Left ventricle myocardium superior (tissue), 1 donor: ENCODE measurements at regions of chr10 and their contacts with region 1.

Region 1: GRCh38 chr10:118568327-118568848 is 27.1 kb downstream of the PRLHR start:
- DNase-seq: no peak
- ATAC-seq: peak; percentile 66

Region 2: GRCh38 chr10:118720685-118721538 is 152.5 kb after region 1 on chr10:
- intact Hi-C with region 1: loop called (anchors 2 kb)
- DNase-seq: no peak
- ATAC-seq: peak; percentile 52

Region 3: DNA sequence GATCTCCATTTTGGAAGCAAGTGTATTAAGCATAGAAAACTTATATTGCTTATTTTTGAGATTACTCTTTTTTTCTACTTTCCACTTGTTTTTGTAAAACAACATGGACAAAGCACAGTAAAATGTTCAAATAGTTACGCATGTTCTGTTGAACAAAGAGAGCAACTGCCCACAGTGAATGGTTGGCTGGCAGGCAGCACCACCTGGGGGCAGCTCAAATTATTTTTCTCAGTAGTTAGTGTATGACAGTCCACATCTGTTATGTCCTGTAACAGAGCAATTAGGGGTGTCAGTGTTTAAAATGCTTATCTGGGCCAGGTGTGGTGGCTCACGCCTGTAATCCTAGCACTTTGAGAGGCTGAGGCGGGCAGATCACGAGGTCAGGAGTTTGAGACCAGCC is 232.5 kb after region 1 on chr10:
- intact Hi-C with region 1: loop called (anchors 10 kb)
- DNase-seq: no peak
- ATAC-seq: peak; percentile 79